ENCODE measurements at regions of chr6 and their contacts with region 1.

Region 1: GRCh38 chr6:122154912-122155575 is 244.4 kb upstream of the HSF2 start:
- DNase-seq: no peak
- H3K4me3 ChIP-seq: no peak overlapping the region
- H3K27ac ChIP-seq: no peak overlapping the region
- H3K27me3 ChIP-seq: no peaks in the 10 kb centered on the region
- CTCF ChIP-seq: no peak

Region 2: GRCh38 chr6:121236984-121237383 is 918.1 kb before region 1 on chr6:
- CTCF ChIA-PET with region 1: no interaction called
- POLR2A ChIA-PET with region 1: interaction called, 16 read pairs
- DNase-seq: no peak
- H3K4me3 ChIP-seq: no peak overlapping the region
- H3K27ac ChIP-seq: no peak overlapping the region
- H3K27me3 ChIP-seq: no peaks in the 10 kb centered on the region
- CTCF ChIP-seq: peak; percentile 10; the same call in 1 of the 2 replicates

Measured in AG04450 (cell line).